Heart left ventricle (tissue), 16 donors: ENCODE measurements at regions of chr19 and their contacts with region 1.

Region 1: DNA sequence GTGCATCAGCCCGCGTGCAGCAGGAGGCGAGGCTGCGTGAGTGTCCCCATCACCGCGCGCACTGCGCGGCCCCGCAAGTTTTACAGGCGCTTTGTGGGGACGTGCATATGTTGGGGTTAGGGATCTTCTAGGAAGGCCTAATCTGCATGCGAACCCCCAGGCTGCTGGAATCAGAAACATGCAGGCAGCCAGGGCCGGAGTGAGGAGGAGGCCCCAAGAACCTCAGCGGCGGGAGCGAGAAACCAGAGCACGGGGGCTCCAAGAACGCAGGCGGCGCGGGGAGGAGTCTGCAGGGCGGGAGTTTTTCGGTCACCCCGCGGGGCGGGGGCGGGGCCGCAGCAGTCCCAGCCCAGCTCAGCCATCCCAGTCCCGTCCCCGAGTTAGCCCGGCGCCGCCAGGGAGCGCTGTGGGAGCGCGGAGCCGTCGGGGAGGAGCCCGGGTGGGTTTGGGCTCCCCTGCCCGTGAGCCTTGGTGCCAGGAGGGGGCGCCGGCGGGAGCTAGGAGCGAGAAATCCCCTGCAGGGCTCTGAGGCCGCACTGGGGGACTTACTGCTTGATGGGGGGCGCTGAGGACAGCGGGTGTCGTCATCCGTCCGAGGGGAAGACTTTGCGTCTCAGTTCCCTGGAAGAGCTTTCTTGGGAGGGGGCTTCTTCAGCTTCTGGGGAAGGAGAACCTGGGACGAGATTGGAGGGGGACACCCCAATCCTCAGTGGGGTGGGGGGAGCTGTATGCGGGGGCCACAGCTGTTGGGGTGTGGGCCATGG is 933 bp upstream of the NRTN start:
- DNase-seq: peak; percentile 84 to 93 (median 85)
- ATAC-seq: peak; percentile 74 to 92 (median 86)
- H3K4me3 ChIP-seq: peak overlapping the region in 10 of 12 donors; percentile 0 to 49 (median 37)
- H3K27ac ChIP-seq: peak overlapping the region in 1 of 12 donors; percentile 76
- H3K4me1 ChIP-seq: peaks cover 0 to 40% (median 10%) of the 10 kb centered on the region in 12 donors
- H3K27me3 ChIP-seq: peaks cover 7 to 53% (median 30%) of the 10 kb centered on the region in 9 donors
- CTCF ChIP-seq: peak; percentile 69 to 95 (median 86)
- POLR2A ChIP-seq: no peak

Region 2: GRCh38 chr19:5775668-5776309 is 28.1 kb before region 1 on chr19:
- intact Hi-C with region 1: no loop called
- DNase-seq: no peak
- ATAC-seq: peak in 1 of 4 donors; percentile 18
- H3K4me3 ChIP-seq: no peak overlapping the region
- H3K27ac ChIP-seq: no peak overlapping the region
- H3K4me1 ChIP-seq: no peaks in the 10 kb centered on the region
- H3K27me3 ChIP-seq: no peaks in the 10 kb centered on the region
- CTCF ChIP-seq: no peak
- POLR2A ChIP-seq: no peak

Region 3: DNA sequence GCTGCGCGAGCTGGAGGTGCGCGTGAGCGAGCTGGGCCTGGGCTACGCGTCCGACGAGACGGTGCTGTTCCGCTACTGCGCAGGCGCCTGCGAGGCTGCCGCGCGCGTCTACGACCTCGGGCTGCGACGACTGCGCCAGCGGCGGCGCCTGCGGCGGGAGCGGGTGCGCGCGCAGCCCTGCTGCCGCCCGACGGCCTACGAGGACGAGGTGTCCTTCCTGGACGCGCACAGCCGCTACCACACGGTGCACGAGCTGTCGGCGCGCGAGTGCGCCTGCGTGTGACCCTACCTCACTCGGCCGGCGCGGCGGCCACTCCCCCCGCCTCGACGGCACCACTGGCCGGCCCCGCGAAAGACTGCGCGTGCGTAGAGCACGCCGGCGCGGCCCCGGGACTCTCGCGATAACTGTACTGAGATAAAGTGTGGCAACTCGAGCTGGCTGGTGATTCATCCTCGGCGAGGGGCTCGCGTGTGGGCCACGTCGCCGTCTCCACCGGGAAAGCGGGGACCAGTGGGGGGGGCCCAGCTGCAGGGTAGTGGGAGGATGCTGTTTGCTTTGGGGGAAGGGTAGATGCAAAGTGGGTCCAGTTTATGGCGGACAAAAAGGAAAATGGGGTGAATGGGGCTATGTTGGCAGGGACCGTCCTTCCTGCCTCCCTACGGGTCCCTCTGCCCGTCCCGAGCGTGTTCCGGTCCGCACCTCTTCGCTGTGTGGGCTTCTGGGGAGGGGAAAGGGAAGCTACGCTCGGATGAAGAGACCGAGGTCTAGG is 24.1 kb after region 1 on chr19:
- intact Hi-C with region 1: loop called in 1 of 10 experiments (anchors 2 kb)
- DNase-seq: peak; percentile 83 to 93 (median 89)
- ATAC-seq: peak; percentile 53 to 78 (median 76)
- H3K4me3 ChIP-seq: peak overlapping the region; percentile 7 to 64 (median 46)
- H3K27ac ChIP-seq: peak overlapping the region in 11 of 12 donors; percentile 43 to 88 (median 80)
- H3K4me1 ChIP-seq: peaks cover 0 to 30% (median 4%) of the 10 kb centered on the region in 12 donors
- H3K27me3 ChIP-seq: peaks cover 0 to 28% (median 13%) of the 10 kb centered on the region in 9 donors
- CTCF ChIP-seq: no peak
- POLR2A ChIP-seq: no peak

Region 4: GRCh38 chr19:5891938-5892771 is 88.2 kb after region 1 on chr19:
- intact Hi-C with region 1: loop called (anchors 1 to 5 kb)
- DNase-seq: peak in 1 of 5 donors; percentile 55
- ATAC-seq: peak; percentile 17 to 38 (median 29)
- H3K4me3 ChIP-seq: no peak overlapping the region
- H3K27ac ChIP-seq: peak overlapping the region in 1 of 12 donors; percentile 89
- H3K4me1 ChIP-seq: peaks cover 0 to 56% (median 27%) of the 10 kb centered on the region in 12 donors
- H3K27me3 ChIP-seq: peaks cover 0 to 15% (median 0%) of the 10 kb centered on the region in 9 donors
- CTCF ChIP-seq: peak; percentile 44 to 73 (median 61)
- POLR2A ChIP-seq: no peak

Region 5: DNA sequence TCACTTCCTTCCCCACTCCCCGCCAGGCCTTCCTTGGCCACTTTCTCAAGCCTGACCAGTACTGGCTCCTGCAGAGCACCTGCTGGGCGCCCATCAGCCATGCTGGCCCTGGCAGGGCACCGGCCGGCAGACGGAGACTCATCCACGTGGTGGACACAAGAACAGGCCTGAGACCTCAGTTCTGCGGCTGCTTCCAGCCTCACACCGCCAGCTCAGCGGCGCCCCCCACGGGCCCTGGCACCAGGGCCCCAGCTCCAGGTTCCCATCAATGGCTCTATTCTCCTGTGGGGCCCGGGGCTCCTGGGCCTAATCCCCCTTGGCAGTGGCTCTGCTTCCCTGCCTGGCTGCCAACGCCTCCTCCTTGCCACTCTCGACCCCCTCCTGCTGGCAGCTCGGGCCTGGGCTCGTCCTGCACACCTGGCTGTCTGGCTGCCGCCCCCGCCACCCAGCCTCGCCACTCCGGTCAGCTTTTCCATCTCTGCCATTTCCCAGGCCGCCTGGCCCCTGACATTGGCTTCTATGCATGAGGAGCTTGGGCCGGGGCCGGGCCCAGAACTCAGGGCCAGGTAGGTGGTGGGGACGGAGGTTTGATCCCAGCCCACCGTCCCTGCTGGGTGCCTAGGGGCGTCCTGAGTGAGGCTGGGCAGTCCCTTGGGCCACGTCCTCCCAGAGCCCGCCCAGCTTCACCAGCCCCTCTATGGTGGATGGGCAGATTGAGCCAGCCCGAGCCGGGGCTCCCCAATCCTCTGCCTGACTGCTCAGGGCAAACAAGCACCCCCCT is 93.4 kb after region 1 on chr19:
- intact Hi-C with region 1: loop called in 9 of 10 experiments (anchors 1 to 5 kb)
- DNase-seq: no peak
- ATAC-seq: no peak
- H3K4me3 ChIP-seq: no peak overlapping the region
- H3K27ac ChIP-seq: peak overlapping the region in 1 of 12 donors; percentile 89
- H3K4me1 ChIP-seq: peaks cover 0 to 69% (median 27%) of the 10 kb centered on the region in 12 donors
- H3K27me3 ChIP-seq: no peaks in the 10 kb centered on the region
- CTCF ChIP-seq: no peak
- POLR2A ChIP-seq: no peak

Region 6: GRCh38 chr19:5967994-5968430 is 164.1 kb after region 1 on chr19:
- intact Hi-C with region 1: loop called in 2 of 10 experiments (anchors 10 kb)
- DNase-seq: peak in 3 of 5 donors; percentile 65 to 69 (median 68)
- ATAC-seq: peak; percentile 44 to 77 (median 52)
- H3K4me3 ChIP-seq: peak overlapping the region in 3 of 12 donors; percentile 3 to 13 (median 6)
- H3K27ac ChIP-seq: peak overlapping the region in 11 of 12 donors; percentile 21 to 77 (median 51)
- H3K4me1 ChIP-seq: peaks cover 8 to 93% (median 68%) of the 10 kb centered on the region in 12 donors
- H3K27me3 ChIP-seq: no peaks in the 10 kb centered on the region
- CTCF ChIP-seq: peak; percentile 85 to 97 (median 92)
- POLR2A ChIP-seq: no peak

Region 7: GRCh38 chr19:5977785-5978605 is 174.1 kb after region 1 on chr19 and contains the start of gene RANBP3:
- intact Hi-C with region 1: loop called in 2 of 10 experiments (anchors 5 to 10 kb)
- DNase-seq: peak; percentile 97 to 100 (median 99)
- ATAC-seq: peak; percentile 97 to 99 (median 98)
- H3K4me3 ChIP-seq: peak within 1 kb of the TSS; percentile 69 to 100 (median 94)
- H3K27ac ChIP-seq: peak within 1 kb of the TSS; percentile 45 to 95 (median 89)
- H3K4me1 ChIP-seq: peaks cover 10 to 59% (median 43%) of the 10 kb centered on the region in 12 donors
- H3K27me3 ChIP-seq: no peaks in the 10 kb centered on the region
- CTCF ChIP-seq: no peak
- POLR2A ChIP-seq: peak in 1 of 2 donors; percentile 80
- total RNA-seq, gene RANBP3: 48.9 to 80.7 (median 58.0) TPM

Region 8: DNA sequence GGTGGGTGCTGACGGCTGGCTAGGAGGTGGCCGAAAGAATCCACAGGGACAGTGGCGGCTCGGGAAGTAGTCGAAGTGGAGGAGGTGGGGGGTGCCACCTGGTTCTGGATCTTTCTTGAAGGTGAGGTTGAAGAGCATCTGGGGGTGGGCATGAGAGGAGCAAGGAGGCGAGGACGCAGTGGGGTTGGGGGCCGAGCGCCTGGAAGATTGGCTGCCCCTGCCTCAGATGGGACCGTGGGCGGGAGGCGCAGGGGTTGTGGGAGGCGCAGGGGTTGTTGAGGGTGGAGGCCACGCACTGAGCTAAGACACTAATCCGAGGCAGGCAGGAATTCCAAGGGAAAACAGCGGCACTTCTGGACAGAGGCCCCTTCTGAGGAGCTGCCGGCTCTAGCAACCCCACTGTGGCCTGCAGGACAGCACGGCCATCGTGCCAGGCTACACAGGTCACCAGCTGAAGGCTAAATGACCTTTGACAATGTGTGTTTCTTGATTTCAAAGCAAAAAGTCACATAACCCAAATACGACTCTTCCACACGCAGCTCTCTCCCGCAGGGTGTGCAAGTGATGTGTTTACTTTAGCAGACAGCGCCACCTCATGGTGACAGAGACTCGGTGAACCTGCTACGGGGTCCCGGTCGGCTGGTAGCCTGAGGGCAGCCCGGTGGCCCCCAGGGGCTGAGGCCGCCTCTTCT is 218.1 kb after region 1 on chr19:
- intact Hi-C with region 1: loop called in 9 of 10 experiments (anchors 1 to 10 kb)
- DNase-seq: peak; percentile 70 to 87 (median 80)
- ATAC-seq: peak; percentile 84 to 94 (median 92)
- H3K4me3 ChIP-seq: no peak overlapping the region
- H3K27ac ChIP-seq: peak overlapping the region in 1 of 12 donors; percentile 17
- H3K4me1 ChIP-seq: peaks cover 0 to 14% (median 3%) of the 10 kb centered on the region in 12 donors
- H3K27me3 ChIP-seq: no peaks in the 10 kb centered on the region
- CTCF ChIP-seq: peak; percentile 71 to 88 (median 78)
- POLR2A ChIP-seq: no peak